Transverse colon (tissue), 4 donors: ENCODE measurements at regions of chr2 and their contacts with region 1.

Region 1: GRCh38 chr2:19349911-19350677 is 8.3 kb downstream of the OSR1 start:
- DNase-seq: peak; percentile 66
- H3K4me3 ChIP-seq: peak overlapping the region in 3 of 4 donors; percentile 7 to 23 (median 21)
- H3K27ac ChIP-seq: peak overlapping the region; percentile 11 to 94 (median 32)
- H3K4me1 ChIP-seq: peaks cover 4 to 28% (median 8%) of the 10 kb centered on the region in 4 donors
- H3K27me3 ChIP-seq: peaks cover 46% of the 10 kb centered on the region
- CTCF ChIP-seq: peak; percentile 77 to 84 (median 81)
- EP300 ChIP-seq: no peak
- POLR2A ChIP-seq: no peak

Region 2: GRCh38 chr2:17759805-17760204 is 1590.3 kb before region 1 on chr2:
- in situ Hi-C with region 1: no loop called
- intact Hi-C with region 1: loop called (anchors 10 kb)
- DNase-seq: no peak
- H3K4me3 ChIP-seq: no peak overlapping the region
- H3K27ac ChIP-seq: no peak overlapping the region
- H3K4me1 ChIP-seq: peaks cover under 1 to 30% (median 8%) of the 10 kb centered on the region in 4 donors
- H3K27me3 ChIP-seq: no peaks in the 10 kb centered on the region
- CTCF ChIP-seq: no peak
- EP300 ChIP-seq: no peak
- POLR2A ChIP-seq: no peak

Region 3: DNA sequence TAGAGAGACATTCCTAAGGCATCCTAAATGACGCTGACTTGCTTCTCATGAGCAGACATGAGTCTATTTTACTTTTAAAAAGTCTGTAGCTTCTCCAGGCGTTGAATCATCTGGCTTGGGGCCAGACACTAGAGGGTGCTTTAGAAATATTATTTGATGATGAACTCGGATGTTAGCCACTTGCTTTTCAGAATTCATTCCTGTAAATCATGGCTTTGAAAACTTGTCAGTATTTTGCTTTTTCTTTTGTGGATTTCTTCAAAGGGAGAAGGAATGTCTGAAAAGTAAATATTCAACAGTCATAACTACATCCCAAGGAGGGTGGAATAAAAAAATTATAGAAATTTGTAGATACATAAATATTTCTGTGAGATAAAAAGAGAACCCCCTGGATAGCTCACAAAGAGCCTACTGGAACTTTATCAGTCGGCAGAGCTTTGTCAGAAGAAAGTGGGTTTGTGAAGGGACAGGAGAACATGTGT is 362.5 kb before region 1 on chr2:
- in situ Hi-C with region 1: no loop called
- intact Hi-C with region 1: loop called (anchors 10 kb)
- DNase-seq: peak; percentile 45
- H3K4me3 ChIP-seq: no peak overlapping the region
- H3K27ac ChIP-seq: peak overlapping the region in 2 of 4 donors; percentile 16 to 29
- H3K4me1 ChIP-seq: peaks cover 0 to 22% (median 6%) of the 10 kb centered on the region in 4 donors
- H3K27me3 ChIP-seq: no peaks in the 10 kb centered on the region
- CTCF ChIP-seq: no peak
- EP300 ChIP-seq: no peak
- POLR2A ChIP-seq: no peak